AG04450 (cell line): ENCODE measurements at regions of chr18 and their contacts with region 1.

Region 1: DNA sequence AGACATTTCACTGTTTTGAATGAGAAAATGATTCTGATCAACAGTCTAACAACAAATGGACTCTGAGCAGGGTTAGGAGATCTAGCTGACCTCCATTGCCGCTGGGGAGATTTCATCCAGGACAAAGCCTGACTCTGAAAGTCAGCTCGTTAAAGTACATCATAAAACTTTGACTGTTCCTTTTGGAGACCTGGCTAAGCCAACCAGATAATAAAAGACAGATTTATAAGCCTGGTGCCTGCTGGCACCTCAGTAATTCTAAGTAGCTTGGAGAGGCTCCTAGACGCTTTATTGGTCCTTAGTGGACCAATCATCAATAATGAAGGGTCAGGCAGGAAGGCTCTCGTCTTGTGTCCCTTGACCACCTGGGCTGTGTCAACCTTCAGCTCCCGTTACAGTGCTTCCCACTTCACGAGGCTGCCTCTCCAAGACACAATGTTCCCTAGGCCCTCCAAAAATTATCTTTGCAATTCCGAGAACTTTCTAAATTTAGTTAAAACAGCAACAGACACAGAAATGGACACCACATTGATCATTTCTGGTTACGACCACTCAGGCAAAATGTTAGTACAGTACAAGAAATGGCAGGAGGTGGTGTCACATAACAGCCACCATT is 47.9 kb upstream of the PMAIP1 start:
- DNase-seq: no peak
- H3K4me3 ChIP-seq: no peak overlapping the region
- H3K27ac ChIP-seq: no peak overlapping the region
- H3K27me3 ChIP-seq: no peaks in the 10 kb centered on the region
- CTCF ChIP-seq: no peak

Region 2: GRCh38 chr18:59318460-59319050 is 533.3 kb before region 1 on chr18 and contains the start of gene CPLX4:
- CTCF ChIA-PET with region 1: no interaction called
- POLR2A ChIA-PET with region 1: interaction called, 11 read pairs
- DNase-seq: no peak
- H3K4me3 ChIP-seq: no peak within 1 kb of the TSS
- H3K27ac ChIP-seq: no peak within 1 kb of the TSS
- H3K27me3 ChIP-seq: peaks cover 18% of the 10 kb centered on the region
- CTCF ChIP-seq: no peak
- polyA plus RNA-seq, gene CPLX4: not detected in 2 replicates